ENCODE measurements at regions of chr22 and their contacts with region 1.

Region 1: DNA sequence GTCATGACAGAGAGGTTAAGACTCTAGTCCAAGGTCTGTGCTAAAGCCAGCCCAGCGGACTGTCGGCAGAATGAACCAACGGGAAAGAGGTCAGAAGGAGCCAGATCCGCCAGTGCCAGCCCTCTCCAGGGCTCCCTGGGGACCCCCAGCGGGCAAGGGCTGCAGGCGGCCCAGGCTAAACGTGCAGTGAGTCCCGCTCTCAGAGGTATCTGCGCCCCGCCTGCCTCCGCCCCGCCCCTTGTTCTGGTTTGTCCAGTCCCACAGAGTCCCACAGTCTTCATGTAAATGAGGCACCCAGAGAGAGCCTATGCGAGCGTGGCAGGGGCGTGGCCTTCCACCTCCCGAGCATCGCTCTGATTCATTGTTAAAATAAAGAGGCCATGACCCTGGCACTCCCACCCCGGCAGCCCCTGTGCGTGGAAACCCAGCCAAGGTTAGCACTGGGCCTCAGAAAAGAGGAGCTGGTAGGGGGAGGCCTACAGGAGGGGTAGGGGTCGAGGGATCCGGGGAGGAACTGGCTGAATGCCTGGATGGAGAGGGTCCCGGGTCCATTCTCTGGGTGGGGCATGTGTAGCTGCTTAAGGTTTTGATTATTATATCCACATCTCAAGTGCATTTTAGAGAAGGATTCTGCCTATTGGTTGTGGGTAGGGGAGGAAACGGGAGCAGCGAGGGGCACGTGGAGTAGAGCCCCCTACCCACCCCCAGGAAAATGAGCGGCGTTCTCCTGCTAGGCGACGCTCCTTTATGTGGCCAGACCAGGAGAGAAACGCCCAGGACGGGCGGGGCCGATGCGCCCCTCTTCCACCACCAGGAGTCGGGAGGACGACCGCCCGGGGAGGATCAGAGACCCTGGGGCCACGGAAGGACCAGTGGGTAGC is at the start of gene TRIOBP:
- DNase-seq: peak; percentile 90 to 97 (median 96)
- ATAC-seq: peak; percentile 98 to 100 (median 99)
- H3K4me3 ChIP-seq: peak within 1 kb of the TSS in 8 of 12 donors; percentile 14 to 43 (median 35)
- H3K27ac ChIP-seq: no peak within 1 kb of the TSS
- H3K4me1 ChIP-seq: peaks cover 0 to 25% (median 13%) of the 10 kb centered on the region in 12 donors
- H3K27me3 ChIP-seq: no peaks in the 10 kb centered on the region
- CTCF ChIP-seq: peak in 11 of 12 donors; percentile 16 to 65 (median 39)
- POLR2A ChIP-seq: no peak
- total RNA-seq, gene TRIOBP: 67.9 to 147 (median 94.7) TPM

Region 2: DNA sequence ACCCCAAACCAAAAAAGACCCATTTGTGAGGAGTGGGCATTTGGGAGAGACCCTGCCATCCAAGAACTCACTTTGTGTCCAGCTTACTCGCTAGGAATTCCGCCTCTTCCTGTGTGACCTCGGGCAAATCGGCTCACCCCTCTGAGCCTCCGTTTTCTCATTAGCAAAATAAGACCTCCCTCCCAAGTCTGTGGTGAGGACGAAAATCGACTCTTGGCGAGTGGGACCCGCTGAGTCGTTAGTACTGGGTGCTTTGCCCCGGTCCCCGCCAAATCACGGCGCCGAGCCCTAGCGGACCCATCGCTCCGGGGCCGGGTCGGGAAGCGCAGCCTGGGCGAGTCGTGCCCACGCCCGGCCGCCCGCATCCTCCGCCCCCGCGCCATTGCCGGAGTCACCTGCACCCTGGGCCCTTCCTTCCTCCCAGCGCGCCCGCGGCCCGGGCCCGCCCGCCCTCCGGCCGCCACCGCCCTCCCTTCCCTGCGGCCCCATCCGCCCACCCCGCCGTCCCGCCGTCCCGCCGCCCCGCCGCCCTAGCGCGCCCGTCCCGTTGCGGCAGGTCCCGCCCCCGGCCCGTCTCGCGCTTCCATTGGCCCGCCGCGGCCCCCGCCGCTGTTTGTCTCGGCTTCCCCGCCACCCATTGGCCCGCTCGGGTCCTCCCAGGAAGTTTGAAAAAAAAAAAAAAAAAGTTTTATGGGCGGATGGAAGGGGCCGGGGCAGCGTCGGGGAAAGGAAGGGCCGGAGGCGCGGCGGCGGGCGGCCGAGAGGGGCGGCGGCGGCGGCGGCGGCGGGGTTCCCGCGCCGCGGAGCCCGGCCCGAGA is 48.9 kb after region 1 on chr22:
- intact Hi-C with region 1: loop called in 2 of 10 experiments (anchors 5 kb)
- DNase-seq: peak; percentile 94 to 96 (median 95)
- ATAC-seq: peak; percentile 65 to 76 (median 70)
- H3K4me3 ChIP-seq: peak overlapping the region; percentile 82 to 100 (median 97)
- H3K27ac ChIP-seq: peak overlapping the region; percentile 95 to 100 (median 99)
- H3K4me1 ChIP-seq: peaks cover 16 to 76% (median 58%) of the 10 kb centered on the region in 12 donors
- H3K27me3 ChIP-seq: no peaks in the 10 kb centered on the region
- CTCF ChIP-seq: no peak
- POLR2A ChIP-seq: peak in 1 of 2 donors; percentile 45

Region 3: DNA sequence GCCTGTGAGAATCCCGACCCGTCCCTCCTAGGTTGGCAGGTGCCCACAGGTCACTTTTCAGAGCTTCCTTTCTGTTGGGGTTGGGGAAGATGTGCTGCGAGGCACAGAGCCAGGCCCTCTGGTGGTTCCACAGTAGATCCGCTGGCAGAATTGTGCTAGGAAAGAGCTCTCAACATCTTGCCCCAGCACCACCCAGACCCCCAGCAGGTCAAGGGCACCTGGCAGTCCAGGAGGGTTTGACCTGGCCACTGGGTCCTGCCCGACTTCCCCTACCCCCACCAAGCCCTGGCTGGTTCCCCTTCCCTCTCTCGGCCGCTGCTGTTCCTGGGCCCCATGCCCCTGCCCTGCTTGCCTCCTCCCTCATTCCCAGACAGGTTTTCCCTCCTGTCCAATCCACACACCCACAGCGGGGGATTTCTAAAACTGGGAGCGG is 84.6 kb after region 1 on chr22:
- intact Hi-C with region 1: no loop called
- DNase-seq: no peak
- ATAC-seq: peak in 1 of 4 donors; percentile 5
- H3K4me3 ChIP-seq: no peak overlapping the region
- H3K27ac ChIP-seq: no peak overlapping the region
- H3K4me1 ChIP-seq: peaks cover 0 to 31% (median 10%) of the 10 kb centered on the region in 12 donors
- H3K27me3 ChIP-seq: no peaks in the 10 kb centered on the region
- CTCF ChIP-seq: peak in 2 of 12 donors; percentile 11 to 12
- POLR2A ChIP-seq: no peak

Region 4: DNA sequence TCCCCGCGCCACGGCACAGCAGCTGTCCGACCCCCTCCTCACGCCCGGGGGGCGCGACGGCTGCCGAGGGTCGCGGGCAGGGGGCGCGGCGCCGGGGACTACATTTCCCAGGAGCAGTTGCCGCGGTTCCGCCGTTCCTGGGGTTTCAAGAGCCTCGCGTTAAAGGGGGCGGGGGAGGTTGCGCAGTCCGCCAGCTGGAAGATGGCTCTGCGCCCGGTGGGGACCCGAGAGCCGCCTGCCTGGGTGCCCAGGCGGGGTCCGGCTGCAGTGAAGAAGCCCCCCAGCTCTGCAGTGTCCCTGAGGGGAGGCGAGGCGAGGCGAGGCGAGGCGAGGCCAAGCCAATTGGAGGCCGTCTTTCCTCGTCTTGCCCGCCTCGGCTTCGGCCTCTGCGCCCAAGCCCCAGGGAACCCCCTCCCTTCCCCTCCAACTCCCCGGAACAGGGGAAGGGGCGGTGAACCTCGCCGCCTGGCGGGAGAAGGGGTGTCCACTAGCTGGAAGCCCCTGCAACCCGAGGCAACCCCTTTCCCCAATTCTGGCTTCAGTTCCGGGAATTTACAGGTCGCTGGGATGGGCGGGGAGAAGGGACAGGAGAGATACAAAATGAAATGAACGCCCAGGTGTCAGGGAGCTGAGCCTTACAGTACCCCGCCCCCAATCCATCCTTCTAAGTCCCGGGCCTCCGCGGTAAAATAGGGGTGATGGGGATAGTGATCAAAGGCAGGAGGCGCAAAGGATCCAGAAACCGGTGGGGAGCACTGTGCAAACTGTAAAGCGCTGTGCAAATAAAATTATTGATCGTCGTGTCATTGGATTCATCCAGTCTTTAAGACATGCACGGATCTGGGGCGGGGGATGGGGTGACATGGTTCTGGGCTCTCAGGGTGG is 105.7 kb after region 1 on chr22:
- intact Hi-C with region 1: loop called in 2 of 10 experiments (anchors 10 kb)
- DNase-seq: peak; percentile 71 to 80 (median 73)
- ATAC-seq: peak in 3 of 4 donors; percentile 16 to 29 (median 26)
- H3K4me3 ChIP-seq: peak overlapping the region; percentile 54 to 83 (median 66)
- H3K27ac ChIP-seq: peak overlapping the region in 7 of 12 donors; percentile 40 to 69 (median 53)
- H3K4me1 ChIP-seq: peaks cover 0 to 43% (median 21%) of the 10 kb centered on the region in 12 donors
- H3K27me3 ChIP-seq: peaks cover 0 to 2% (median 0%) of the 10 kb centered on the region in 9 donors
- CTCF ChIP-seq: no peak
- POLR2A ChIP-seq: no peak